A549 (cell line): ENCODE measurements at regions of chr19 and their contacts with region 1.

Region 1: DNA sequence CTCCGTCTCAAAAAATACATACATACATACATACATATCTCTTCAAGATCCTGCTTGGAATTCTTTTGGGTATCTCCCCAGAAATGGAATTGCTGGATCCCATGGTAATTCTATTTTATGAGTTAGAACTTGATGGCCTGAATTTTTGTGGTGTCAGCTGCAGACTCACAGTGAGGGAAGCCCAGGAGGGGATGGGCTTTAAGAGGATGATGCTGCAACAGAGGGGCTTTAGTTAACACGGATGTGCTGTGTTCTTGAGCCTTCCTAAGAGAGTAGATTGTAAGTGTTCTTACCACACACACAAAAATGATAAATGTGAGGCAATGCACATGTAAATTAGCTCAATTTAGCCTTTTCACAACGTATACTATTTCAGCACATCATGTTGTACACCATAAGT is 31.8 kb downstream of the CACNG6 start:
- DNase-seq: peak in 1 of 2 experiments; percentile 45
- ATAC-seq: no peak
- H3K4me3 ChIP-seq: no peak overlapping the region
- H3K27ac ChIP-seq: peak overlapping the region; percentile 85 to 92
- H3K4me1 ChIP-seq: peaks cover 40% of the 10 kb centered on the region
- CTCF ChIP-seq: no peak
- EP300 ChIP-seq: no peak
- POLR2A ChIP-seq: no peak
- RAD21 ChIP-seq: no peak

Region 2: DNA sequence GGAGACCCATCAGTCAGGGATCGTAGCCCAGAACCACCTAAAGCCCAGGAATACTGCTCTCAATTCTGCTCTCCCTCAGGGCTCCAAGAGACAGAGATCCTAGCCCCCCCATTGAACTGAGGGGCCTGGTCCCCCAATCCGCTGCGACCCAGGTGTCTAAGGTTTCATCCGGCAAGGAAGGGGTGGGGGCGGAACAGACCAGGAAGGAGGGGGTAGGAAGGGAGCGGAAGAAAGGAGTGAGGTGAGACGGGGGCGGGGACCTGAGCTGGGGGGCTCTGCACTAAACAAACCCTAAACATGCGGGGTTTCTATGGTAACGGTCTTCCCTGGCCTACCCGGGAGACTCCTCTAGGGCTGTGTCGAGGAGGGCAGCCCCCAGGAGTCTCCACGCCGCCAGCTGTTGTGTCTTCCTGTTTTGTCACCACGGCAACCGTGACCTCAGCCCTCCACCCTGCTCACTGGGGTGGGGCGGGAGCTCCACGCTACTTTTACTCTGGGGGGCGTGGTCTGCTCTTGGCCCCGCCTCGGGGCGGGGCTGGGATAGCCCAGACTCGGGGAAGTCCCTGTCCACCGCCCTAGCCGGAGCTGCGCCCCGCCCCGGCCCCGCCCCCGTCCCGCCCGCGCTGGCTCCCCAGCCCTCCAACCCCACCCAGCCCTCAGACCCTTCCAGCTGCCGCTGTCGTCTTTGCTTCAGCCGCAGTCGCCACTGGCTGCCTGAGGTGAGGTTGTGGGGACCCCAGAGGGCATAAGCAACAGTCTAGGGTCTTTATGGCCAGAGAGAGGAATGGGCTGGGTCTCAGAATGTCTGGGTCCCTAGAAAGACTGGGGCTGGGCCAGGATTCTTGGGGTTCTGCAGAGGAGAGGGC is 155.7 kb before region 1 on chr19 and contains the start of gene MYADM:
- CTCF ChIA-PET with region 1: interaction called, 22 read pairs
- POLR2A ChIA-PET with region 1: interaction called, 8 read pairs
- DNase-seq: peak; percentile 99 to 100
- ATAC-seq: peak; percentile 48 to 57
- H3K4me3 ChIP-seq: peak within 1 kb of the TSS; percentile 69
- H3K27ac ChIP-seq: peak within 1 kb of the TSS; percentile 94
- H3K4me1 ChIP-seq: peaks cover 34% of the 10 kb centered on the region
- CTCF ChIP-seq: no peak
- EP300 ChIP-seq: peak in 1 of 2 experiments; percentile 57; a peak in 1 of 5 replicates
- POLR2A ChIP-seq: peak; percentile 66
- RAD21 ChIP-seq: no peak
- polyA plus RNA-seq, gene MYADM: 37.7 and 56.1 TPM in 2 replicates

Region 3: GRCh38 chr19:53906211-53907192 is 116.7 kb before region 1 on chr19:
- CTCF ChIA-PET with region 1: interaction called, 63 read pairs
- POLR2A ChIA-PET with region 1: no interaction called
- DNase-seq: peak in 1 of 2 experiments; percentile 92
- ATAC-seq: peak; percentile 57 to 65
- H3K4me3 ChIP-seq: peak overlapping the region; percentile 19; the same call in 1 of the 3 replicates
- H3K27ac ChIP-seq: peak overlapping the region; percentile 9 to 82; a peak in 4 of 6 replicates
- H3K4me1 ChIP-seq: peaks cover 42% of the 10 kb centered on the region
- CTCF ChIP-seq: peak; percentile 88
- EP300 ChIP-seq: no peak
- POLR2A ChIP-seq: no peak
- RAD21 ChIP-seq: peak; percentile 85 to 91

Region 4: GRCh38 chr19:53947624-53948023 is 75.6 kb before region 1 on chr19:
- CTCF ChIA-PET with region 1: interaction called, 17 read pairs
- POLR2A ChIA-PET with region 1: no interaction called
- DNase-seq: peak; percentile 67 to 84
- ATAC-seq: peak; percentile 73 to 83; a peak in 4 of 6 replicates
- H3K4me3 ChIP-seq: no peak overlapping the region
- H3K27ac ChIP-seq: no peak overlapping the region
- H3K4me1 ChIP-seq: 0 out of 3 replicates have a peak, but pooled peaks cover 8% of the 10 kb centered on the region
- CTCF ChIP-seq: peak; percentile 40; the same call in 2 of the 3 replicates
- EP300 ChIP-seq: no peak
- POLR2A ChIP-seq: no peak
- RAD21 ChIP-seq: peak; percentile 24 to 63; a peak in 2 of 5 replicates

Region 5: DNA sequence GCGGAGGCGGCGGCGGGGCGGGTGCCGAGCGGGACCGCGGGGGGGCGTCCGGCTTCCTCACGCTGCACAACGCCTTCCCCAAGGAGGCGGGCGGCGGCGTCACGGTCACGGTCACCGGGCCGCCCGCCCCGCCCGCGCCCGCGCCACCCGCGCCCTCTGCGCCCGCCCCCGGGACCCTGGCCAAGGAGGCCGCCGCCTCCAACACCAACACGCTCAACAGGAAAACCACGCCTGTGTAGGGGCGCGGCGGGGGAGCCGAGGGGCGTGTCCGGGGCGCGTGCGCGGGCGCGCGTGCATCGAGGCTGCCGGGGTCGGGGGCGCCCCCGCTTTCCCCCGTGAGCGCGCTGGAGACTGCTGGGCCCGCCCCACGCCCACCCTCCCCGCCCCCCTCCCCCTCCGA is 40.6 kb before region 1 on chr19:
- CTCF ChIA-PET with region 1: interaction called, 59 read pairs
- POLR2A ChIA-PET with region 1: interaction called, 31 read pairs
- DNase-seq: peak; percentile 64 to 79
- ATAC-seq: no peak
- H3K4me3 ChIP-seq: peak overlapping the region; percentile 69
- H3K27ac ChIP-seq: peak overlapping the region; percentile 84 to 97
- H3K4me1 ChIP-seq: peaks cover 22% of the 10 kb centered on the region
- CTCF ChIP-seq: no peak
- EP300 ChIP-seq: no peak
- POLR2A ChIP-seq: no peak
- RAD21 ChIP-seq: no peak

Region 6: DNA sequence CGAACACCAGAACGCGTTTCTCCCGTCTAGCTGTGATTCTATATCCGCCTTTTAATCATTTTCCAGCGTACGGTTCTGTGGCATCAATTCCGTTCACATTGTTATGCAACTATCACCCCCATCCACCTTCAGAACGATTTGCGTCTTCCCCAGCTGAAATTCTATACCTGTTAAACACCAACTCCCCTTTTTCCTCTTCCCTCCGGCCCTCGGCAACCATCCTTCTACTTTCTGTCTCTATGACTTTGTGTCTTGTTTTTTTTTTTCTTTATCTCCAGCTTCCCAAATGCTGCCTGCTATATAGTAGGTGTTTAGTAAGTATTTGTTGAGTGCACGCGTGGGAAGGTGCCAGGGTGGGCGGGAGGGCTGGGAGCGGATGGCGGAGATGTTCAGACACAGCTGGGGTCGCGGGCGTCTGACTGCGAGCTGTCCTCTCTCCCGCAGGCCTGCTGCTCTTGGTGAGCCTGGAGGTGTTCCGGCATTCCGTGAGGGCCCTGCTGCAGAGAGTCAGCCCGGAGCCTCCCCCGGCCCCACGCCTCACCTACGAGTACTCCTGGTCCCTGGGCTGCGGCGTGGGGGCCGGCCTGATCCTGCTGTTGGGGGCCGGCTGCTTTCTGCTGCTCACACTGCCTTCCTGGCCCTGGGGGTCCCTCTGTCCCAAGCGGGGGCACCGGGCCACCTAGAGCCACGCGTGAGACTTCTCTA is 11.5 kb before region 1 on chr19:
- CTCF ChIA-PET with region 1: interaction called, 31 read pairs
- POLR2A ChIA-PET with region 1: interaction called, 3 read pairs
- DNase-seq: no peak
- ATAC-seq: no peak
- H3K4me3 ChIP-seq: no peak overlapping the region
- H3K27ac ChIP-seq: peak overlapping the region; percentile 38 to 92
- H3K4me1 ChIP-seq: peaks cover 46% of the 10 kb centered on the region
- CTCF ChIP-seq: no peak
- EP300 ChIP-seq: no peak
- POLR2A ChIP-seq: no peak
- RAD21 ChIP-seq: no peak

Region 7: DNA sequence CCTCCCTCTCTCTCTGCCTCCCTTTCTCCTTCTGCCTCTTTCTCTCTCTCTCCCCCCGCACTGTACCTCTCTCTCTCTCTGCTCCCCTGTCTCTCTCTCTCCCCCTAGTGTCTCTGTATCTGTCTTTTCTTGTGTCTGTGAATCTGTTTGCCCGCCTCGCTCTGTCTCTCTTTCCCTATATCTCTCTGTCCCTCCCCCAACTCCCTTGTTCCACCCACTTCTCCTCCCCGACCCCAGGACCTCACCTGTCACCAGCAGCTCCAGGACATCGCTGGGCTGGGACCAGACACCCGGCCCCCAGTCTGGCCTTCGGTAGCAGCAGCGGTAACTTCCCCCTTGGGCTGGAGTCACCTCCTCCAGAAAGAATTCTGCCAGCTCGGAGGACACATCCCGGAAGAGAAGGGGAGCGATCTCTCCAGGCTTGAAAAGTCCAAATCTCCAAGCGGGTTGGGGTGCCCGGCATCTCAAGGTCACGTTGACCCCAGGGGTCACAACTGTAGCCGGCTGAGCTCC is 73.5 kb after region 1 on chr19:
- CTCF ChIA-PET with region 1: interaction called, 25 read pairs
- POLR2A ChIA-PET with region 1: no interaction called
- DNase-seq: peak; percentile 68 to 79
- ATAC-seq: peak; percentile 88 to 89
- H3K4me3 ChIP-seq: peak overlapping the region; percentile 33
- H3K27ac ChIP-seq: peak overlapping the region; percentile 40 to 78; a peak in 5 of 6 replicates
- H3K4me1 ChIP-seq: peaks cover 11% of the 10 kb centered on the region; the same call in 1 of the 3 replicates
- CTCF ChIP-seq: no peak; the same call in 2 of the 3 replicates
- EP300 ChIP-seq: no peak
- POLR2A ChIP-seq: peak; percentile 17; the same call in 1 of the 2 replicates
- RAD21 ChIP-seq: peak in 1 of 2 experiments; percentile 65; a peak in 4 of 5 replicates

Region 8: DNA sequence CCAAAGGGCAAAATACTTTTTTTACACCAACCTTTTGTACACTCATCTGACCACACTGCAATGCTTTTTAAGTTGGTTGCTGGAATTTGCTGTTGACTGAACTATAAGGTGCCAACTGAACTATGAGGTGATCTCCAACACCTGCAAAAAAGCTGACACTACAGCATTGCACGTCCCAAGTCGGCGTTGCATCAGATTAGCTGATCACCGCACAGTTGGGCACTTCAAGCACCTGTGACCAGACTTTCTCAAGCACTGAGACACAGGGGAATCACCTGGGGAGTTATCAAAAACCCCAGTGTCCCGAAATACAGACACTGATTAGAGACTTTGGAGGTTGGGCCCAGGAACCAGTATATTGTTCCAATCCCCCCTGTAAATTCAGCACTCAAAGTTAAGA is 1807.5 kb after region 1 on chr19:
- CTCF ChIA-PET with region 1: no interaction called
- POLR2A ChIA-PET with region 1: no interaction called
- DNase-seq: no peak
- ATAC-seq: no peak
- H3K4me3 ChIP-seq: no peak overlapping the region
- H3K27ac ChIP-seq: no peak overlapping the region
- H3K4me1 ChIP-seq: no peaks in the 10 kb centered on the region
- CTCF ChIP-seq: no peak
- EP300 ChIP-seq: no peak
- POLR2A ChIP-seq: no peak
- RAD21 ChIP-seq: no peak